ENCODE measurements at regions of chr7 and their contacts with region 1.

Region 1: DNA sequence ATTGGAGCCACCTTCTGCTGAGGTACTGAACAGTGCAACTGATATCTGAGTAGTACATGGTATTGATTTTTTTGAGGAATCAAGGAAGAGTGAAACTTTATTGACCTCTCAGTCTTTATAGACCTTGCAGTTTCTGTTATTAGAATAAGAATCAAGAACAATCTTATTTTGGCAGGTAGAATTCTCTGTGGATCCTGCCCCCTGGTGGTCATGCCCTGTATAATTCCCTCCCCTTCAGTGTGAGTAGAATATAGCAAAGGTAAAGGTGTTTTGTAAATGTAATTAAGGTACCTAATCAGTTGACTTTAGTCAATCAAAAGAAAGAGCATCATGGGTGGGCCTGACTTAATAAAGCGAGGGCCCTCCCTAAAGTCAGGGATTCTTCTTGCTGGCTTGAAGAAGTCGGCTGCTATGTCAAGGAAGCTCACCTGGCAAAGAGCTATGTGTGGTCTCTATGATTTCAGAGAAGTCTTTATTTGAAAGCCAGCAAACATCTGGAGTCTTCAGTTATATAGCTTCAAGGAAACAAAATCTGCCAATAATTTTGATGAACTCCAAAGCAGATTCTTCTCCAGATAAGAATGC is 142.8 kb downstream of the LSM5 start:
- DNase-seq: peak; percentile 28
- H3K4me3 Mint-ChIP-seq: no peak overlapping the region
- H3K27ac Mint-ChIP-seq: no peak overlapping the region
- H3K4me1 Mint-ChIP-seq: no peaks in the 10 kb centered on the region
- H3K27me3 Mint-ChIP-seq: no peaks in the 10 kb centered on the region

Region 2: GRCh38 chr7:32191305-32191704 is 156.0 kb before region 1 on chr7:
- CTCF ChIA-PET with region 1: no interaction called
- POLR2A ChIA-PET with region 1: no interaction called
- DNase-seq: no peak
- H3K4me3 Mint-ChIP-seq: no peak overlapping the region
- H3K27ac Mint-ChIP-seq: no peak overlapping the region
- H3K4me1 Mint-ChIP-seq: no peaks in the 10 kb centered on the region
- H3K27me3 Mint-ChIP-seq: no peaks in the 10 kb centered on the region

Region 3: GRCh38 chr7:32335107-32335506 is 12.2 kb before region 1 on chr7:
- CTCF ChIA-PET with region 1: no interaction called
- POLR2A ChIA-PET with region 1: no interaction called
- DNase-seq: no peak
- H3K4me3 Mint-ChIP-seq: no peak overlapping the region
- H3K27ac Mint-ChIP-seq: no peak overlapping the region
- H3K4me1 Mint-ChIP-seq: no peaks in the 10 kb centered on the region
- H3K27me3 Mint-ChIP-seq: no peaks in the 10 kb centered on the region

Region 4: GRCh38 chr7:32357535-32358277 is 10.4 kb after region 1 on chr7:
- CTCF ChIA-PET with region 1: interaction called, 12 read pairs
- POLR2A ChIA-PET with region 1: no interaction called
- DNase-seq: no peak
- H3K4me3 Mint-ChIP-seq: no peak overlapping the region
- H3K27ac Mint-ChIP-seq: no peak overlapping the region
- H3K4me1 Mint-ChIP-seq: no peaks in the 10 kb centered on the region
- H3K27me3 Mint-ChIP-seq: no peaks in the 10 kb centered on the region

Region 5: DNA sequence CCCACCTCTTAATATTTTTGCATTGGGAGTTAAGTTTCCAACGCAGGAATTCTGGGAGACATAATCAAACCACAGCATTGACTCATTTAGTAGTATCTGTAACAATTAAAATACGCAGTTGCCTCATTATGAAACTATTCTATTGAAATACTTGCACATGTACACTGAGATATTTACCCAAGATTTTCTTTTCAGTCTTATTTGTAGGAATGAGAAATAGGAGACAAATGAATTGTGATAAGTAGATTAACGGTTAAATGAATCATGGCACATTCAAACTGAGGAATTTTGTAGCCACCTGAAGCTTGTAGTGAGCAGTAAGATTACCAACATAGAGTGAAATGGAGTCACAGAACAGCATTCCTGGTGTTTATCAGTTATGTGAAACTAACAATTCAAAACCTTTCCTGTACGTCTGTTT is 743.8 kb after region 1 on chr7:
- CTCF ChIA-PET with region 1: no interaction called
- POLR2A ChIA-PET with region 1: no interaction called
- DNase-seq: no peak
- H3K4me3 Mint-ChIP-seq: no peak overlapping the region
- H3K27ac Mint-ChIP-seq: no peak overlapping the region
- H3K4me1 Mint-ChIP-seq: peaks cover 2% of the 10 kb centered on the region
- H3K27me3 Mint-ChIP-seq: no peaks in the 10 kb centered on the region